AG04450 (cell line): ENCODE measurements at regions of chr15 and their contacts with region 1.

Region 1: GRCh38 chr15:65856821-65857455 is 12.4 kb upstream of the RAB11A start:
- DNase-seq: no peak
- H3K4me3 ChIP-seq: no peak overlapping the region
- H3K27ac ChIP-seq: no peak overlapping the region
- H3K27me3 ChIP-seq: peaks cover 7% of the 10 kb centered on the region
- CTCF ChIP-seq: peak; percentile 86

Region 2: DNA sequence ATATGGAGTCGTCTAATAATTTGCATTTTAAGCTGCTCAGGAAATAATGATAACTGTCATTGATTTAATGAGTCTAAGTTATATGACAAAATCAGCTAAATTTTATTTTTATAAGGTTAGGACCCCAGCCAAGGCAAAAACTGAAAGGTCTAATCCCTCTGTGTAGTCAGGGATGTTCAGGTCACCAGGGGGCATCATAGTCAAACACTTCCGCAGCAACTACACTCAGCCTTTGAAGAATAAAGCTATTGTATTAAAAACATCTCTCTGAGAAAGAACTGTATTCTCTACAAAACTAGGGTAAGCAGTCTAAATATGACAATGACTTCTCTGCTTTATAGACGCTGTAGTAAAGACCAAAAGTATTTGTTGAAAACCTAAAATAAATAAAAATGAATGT is 261.0 kb before region 1 on chr15:
- CTCF ChIA-PET with region 1: interaction called, 10 read pairs
- POLR2A ChIA-PET with region 1: no interaction called
- DNase-seq: no peak
- H3K4me3 ChIP-seq: no peak overlapping the region
- H3K27ac ChIP-seq: no peak overlapping the region
- H3K27me3 ChIP-seq: no peaks in the 10 kb centered on the region
- CTCF ChIP-seq: peak; percentile 41

Region 3: GRCh38 chr15:65638681-65639089 is 218.3 kb before region 1 on chr15:
- CTCF ChIA-PET with region 1: interaction called, 16 read pairs
- POLR2A ChIA-PET with region 1: no interaction called
- DNase-seq: peak; percentile 55
- H3K4me3 ChIP-seq: no peak overlapping the region
- H3K27ac ChIP-seq: no peak overlapping the region
- H3K27me3 ChIP-seq: no peaks in the 10 kb centered on the region
- CTCF ChIP-seq: peak; percentile 90

Region 4: GRCh38 chr15:65660927-65661326 is 196.0 kb before region 1 on chr15:
- CTCF ChIA-PET with region 1: interaction called, 11 read pairs
- POLR2A ChIA-PET with region 1: no interaction called
- DNase-seq: no peak
- H3K4me3 ChIP-seq: no peak overlapping the region
- H3K27ac ChIP-seq: no peak overlapping the region
- H3K27me3 ChIP-seq: no peaks in the 10 kb centered on the region
- CTCF ChIP-seq: no peak

Region 5: DNA sequence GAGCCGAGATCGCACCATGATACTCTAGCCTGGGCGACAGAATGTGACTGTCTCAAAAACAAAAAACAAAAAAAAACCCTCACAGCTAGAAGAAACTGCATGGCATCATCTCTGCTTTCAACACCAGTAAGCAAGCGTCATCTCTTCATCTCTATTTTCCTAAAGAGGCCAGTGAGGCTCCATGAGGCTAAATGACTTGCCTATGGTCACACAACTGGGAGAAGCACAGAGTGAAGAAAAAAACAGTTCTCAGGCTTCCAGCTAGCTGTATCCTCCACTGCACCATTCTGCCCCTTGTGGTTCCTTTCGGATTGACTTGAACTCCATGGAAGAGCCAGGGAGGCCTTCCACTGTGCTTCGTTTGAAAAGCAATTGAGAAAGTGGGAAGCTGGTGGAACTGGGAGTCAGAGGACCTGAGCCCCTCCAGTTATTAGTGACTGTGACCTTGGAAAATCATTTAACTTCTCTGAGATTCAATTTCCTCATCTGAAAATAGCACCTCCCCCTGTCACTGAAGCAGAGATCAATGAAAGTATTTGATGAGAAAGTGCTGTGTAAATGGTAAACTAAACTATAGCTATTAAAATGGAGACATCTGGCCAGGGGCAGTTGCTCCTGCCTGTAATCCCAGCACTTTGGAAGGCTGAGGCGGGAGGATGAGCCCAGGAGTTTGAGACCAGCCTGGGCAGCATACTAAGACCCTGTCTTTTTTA is 32.8 kb before region 1 on chr15:
- CTCF ChIA-PET with region 1: interaction called, 13 read pairs
- POLR2A ChIA-PET with region 1: no interaction called
- DNase-seq: no peak
- H3K4me3 ChIP-seq: no peak overlapping the region
- H3K27ac ChIP-seq: no peak overlapping the region
- H3K27me3 ChIP-seq: no peaks in the 10 kb centered on the region
- CTCF ChIP-seq: peak; percentile 84

Region 6: GRCh38 chr15:65841121-65841925 is 15.6 kb before region 1 on chr15:
- CTCF ChIA-PET with region 1: interaction called, 10 read pairs
- POLR2A ChIA-PET with region 1: no interaction called
- DNase-seq: no peak
- H3K4me3 ChIP-seq: no peak overlapping the region
- H3K27ac ChIP-seq: no peak overlapping the region
- H3K27me3 ChIP-seq: no peaks in the 10 kb centered on the region
- CTCF ChIP-seq: no peak

Region 7: DNA sequence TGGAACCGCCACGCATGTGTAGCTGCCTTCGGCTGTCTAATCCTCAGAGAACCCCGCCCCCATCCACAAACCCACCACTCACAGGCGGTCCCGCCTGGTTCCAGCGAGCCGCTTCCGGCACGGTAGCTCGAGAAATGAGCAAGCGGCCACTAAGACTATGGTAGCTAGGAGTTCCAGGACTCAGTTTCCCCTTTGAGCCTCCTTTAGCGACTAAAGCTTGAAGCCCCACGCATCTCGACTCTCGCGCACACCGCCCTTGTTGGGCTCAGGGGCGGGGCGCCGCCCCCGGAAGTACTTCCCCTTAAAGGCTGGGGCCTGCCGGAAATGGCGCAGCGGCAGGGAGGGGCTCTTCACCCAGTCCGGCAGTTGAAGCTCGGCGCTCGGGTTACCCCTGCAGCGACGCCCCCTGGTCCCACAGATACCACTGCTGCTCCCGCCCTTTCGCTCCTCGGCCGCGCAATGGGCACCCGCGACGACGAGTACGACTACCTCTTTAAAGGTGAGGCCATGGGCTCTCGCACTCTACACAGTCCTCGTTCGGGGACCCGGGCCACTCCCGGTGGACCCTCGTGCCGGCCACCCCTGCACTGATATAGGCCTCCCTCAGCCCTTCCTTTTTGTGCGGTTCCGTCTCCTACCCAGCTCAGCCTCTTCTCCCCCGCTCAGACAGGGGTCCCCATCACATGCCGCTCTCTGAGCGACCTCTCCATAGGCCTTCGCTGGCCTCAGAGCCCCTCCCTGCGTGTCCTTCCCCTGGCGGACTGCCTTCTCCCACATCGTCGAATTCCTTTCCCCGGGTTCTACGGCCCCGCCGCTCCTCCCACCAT is 12.4 kb after region 1 on chr15 and contains the start of gene RAB11A:
- CTCF ChIA-PET with region 1: interaction called, 11 read pairs
- POLR2A ChIA-PET with region 1: no interaction called
- DNase-seq: peak; percentile 93
- H3K4me3 ChIP-seq: peak within 1 kb of the TSS; percentile 99
- H3K27ac ChIP-seq: peak within 1 kb of the TSS; percentile 83
- H3K27me3 ChIP-seq: no peaks in the 10 kb centered on the region
- CTCF ChIP-seq: peak; percentile 44
- polyA plus RNA-seq, gene RAB11A: 315 and 399 TPM in 2 replicates

Region 8: GRCh38 chr15:65887565-65887964 is 30.6 kb after region 1 on chr15:
- CTCF ChIA-PET with region 1: no interaction called
- POLR2A ChIA-PET with region 1: no interaction called
- DNase-seq: no peak
- H3K4me3 ChIP-seq: no peak overlapping the region
- H3K27ac ChIP-seq: no peak overlapping the region
- H3K27me3 ChIP-seq: no peaks in the 10 kb centered on the region
- CTCF ChIP-seq: no peak